ENCODE measurements at regions of chr2 and their contacts with region 1.

Region 1: DNA sequence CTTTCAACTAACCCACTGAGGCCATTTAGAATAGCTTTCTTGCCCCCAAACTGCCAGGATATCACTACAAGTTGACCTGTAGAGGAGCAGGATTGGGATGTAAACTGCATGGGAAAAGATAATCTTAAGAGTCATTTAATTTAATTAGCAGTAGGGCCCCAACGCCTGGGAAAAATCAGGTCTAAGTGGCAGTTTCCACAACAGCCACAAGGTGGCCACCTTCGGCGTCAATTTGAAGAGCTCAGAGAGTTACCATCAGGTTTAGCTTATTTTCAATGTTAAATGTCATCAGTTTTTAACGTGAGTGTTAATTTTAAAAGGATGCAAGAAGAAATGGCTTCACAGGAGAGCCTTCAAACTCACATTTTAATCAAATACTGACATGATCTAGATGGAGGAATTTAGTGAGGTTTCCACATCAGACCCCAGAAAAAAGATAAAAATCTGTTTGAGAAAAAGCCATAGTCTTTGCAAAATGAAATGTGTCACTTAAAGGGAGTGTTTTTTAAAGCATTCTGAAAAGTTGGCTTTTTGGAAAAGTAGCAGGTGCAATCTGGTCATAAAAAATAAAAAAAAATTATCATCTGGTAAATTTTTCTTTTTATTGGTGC is 77.3 kb upstream of the UPP2 start:
- ATAC-seq: peak in 4 of 8 experiments; percentile 32 to 71 (median 48)
- H3K4me3 ChIP-seq: no peak overlapping the region
- H3K27ac ChIP-seq: no peak overlapping the region
- H3K4me1 ChIP-seq: no peaks in the 10 kb centered on the region

Region 2: DNA sequence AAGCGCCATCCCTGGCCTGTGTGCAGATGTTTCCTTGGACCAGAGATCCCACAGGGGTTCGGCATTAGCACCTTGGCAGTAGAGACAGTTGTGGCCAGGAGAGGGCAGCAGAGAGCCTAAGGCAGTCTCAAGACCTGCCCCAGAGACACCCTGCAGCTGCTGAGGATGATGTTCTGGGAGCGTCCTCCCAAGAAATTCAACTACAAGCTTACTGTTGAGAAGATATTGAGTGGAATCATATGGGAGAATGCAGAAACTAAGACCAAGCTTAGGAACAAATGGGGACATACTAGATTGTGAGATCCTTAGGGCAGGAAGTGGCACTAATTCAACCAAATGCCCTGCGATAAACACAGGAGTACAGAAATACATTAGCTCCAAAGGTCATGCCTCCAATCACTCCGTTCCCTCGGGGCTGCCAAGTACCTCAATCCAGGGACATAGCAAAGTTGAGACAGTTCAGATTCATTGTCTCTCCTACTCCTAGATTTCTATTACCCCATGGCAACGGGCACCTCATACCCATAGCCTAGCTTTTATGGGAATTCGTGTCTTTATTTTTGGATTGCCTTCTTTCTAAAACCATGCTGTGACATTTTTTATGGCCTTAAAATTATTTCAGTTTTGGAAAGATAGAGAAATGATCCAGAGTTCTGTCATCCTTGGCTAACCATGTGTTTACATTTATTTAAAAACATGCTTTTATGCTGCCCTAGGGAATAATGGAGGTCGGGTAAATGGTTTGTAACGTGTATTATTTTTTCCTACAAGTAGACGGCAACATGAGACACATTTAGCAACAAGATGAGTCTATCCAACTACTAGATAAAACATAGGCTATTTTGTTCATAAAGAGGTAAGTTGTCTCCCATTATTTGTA is 696.5 kb before region 1 on chr2:
- in situ Hi-C with region 1: loop called in 2 of 9 experiments (anchors 25 kb)
- ATAC-seq: peak; percentile 66 to 100 (median 80)
- H3K4me3 ChIP-seq: no peak overlapping the region
- H3K27ac ChIP-seq: no peak overlapping the region
- H3K4me1 ChIP-seq: peaks cover 12% of the 10 kb centered on the region in 2 donors

Region 3: DNA sequence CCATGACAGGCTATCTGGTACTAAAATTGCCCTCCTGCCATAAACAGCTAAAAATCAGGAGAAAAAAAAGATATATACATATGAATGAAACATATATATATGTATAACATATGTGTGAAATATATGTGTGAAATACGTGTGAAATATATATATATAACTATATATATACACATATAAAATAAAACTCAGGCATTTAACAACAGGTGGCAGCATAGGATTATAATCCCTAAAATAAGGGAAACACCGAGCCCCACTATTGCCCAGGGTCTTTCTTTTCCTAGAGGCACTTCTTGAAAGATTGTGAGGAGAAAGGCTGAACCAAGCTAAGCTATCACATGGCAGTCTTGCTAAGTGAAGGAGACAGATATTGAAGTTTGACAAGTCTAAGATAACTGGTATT is 514.6 kb before region 1 on chr2:
- in situ Hi-C with region 1: loop called in 1 of 9 experiments (anchors 25 kb)
- ATAC-seq: no peak
- H3K4me3 ChIP-seq: no peak overlapping the region
- H3K27ac ChIP-seq: no peak overlapping the region
- H3K4me1 ChIP-seq: no peaks in the 10 kb centered on the region

Region 4: GRCh38 chr2:158745044-158745865 is 720.9 kb after region 1 on chr2:
- in situ Hi-C with region 1: loop called in 4 of 9 experiments (anchors 10 to 25 kb)
- ATAC-seq: peak; percentile 64 to 91 (median 89)
- H3K4me3 ChIP-seq: peak overlapping the region in 1 of 5 donors; percentile 11
- H3K27ac ChIP-seq: no peak overlapping the region
- H3K4me1 ChIP-seq: peaks cover under 1 to 5% of the 10 kb centered on the region in 2 donors

Region 5: DNA sequence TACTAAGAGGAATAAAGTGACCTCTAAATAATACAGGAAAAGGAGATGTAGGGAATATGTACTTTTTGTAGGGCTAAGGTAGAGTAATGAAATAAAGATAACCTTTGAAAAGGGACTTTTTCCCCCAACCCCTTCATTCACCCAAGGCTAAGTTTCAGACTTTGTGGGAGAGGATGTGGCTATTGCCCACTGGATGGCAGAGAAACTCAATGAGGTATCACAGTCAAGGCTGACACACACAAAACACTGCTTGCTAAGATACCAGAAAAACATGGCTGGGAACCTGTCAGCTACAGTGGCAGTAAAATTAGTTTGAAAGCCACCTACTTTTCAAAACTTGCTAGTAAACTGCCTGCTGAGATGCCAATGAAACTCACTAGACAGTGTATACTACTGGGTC is 1420.9 kb after region 1 on chr2:
- in situ Hi-C with region 1: no loop called
- ATAC-seq: no peak
- H3K4me3 ChIP-seq: no peak overlapping the region
- H3K27ac ChIP-seq: no peak overlapping the region
- H3K4me1 ChIP-seq: peaks cover 0 to 2% of the 10 kb centered on the region in 2 donors

Measured in motor neuron (in vitro differentiated cells).